Activated CD4-positive, alpha-beta memory T cell treated with anti-CD3 and anti-CD28 coated beads for 36 hours (primary cell): ENCODE measurements at regions of chr10 and their contacts with region 1.

Region 1: DNA sequence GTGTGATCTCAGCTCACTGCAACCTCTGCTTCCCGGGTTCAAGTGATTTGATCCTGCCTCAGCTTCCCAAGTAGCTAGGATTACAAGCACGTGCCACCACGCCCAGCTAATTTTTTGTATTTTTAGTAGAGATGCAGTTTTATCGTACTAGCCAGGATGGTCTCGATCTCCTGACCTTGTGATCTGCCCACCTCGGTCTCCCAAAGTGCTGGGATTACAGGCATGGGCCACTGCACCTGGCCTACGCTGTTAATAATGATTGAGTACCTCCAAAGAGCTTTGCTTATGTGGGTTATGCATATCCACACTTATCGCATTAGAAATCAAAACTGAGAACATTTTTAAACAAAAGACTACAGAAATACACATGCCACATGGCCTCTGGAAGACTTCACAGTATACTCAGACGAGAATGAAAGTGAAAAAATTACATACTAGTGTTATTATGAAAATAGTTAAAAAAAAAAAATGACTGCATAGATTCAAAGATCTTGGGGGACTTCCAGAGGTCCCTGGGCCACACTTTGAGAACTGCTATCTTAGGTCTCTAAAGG is 25.4 kb downstream of the RPP38 start:
- DNase-seq: peak; percentile 45
- H3K4me3 Mint-ChIP-seq: peak overlapping the region; percentile 53
- H3K27ac Mint-ChIP-seq: peak overlapping the region; percentile 92
- H3K4me1 Mint-ChIP-seq: peaks cover 32% of the 10 kb centered on the region
- H3K27me3 Mint-ChIP-seq: no peaks in the 10 kb centered on the region

Region 2: DNA sequence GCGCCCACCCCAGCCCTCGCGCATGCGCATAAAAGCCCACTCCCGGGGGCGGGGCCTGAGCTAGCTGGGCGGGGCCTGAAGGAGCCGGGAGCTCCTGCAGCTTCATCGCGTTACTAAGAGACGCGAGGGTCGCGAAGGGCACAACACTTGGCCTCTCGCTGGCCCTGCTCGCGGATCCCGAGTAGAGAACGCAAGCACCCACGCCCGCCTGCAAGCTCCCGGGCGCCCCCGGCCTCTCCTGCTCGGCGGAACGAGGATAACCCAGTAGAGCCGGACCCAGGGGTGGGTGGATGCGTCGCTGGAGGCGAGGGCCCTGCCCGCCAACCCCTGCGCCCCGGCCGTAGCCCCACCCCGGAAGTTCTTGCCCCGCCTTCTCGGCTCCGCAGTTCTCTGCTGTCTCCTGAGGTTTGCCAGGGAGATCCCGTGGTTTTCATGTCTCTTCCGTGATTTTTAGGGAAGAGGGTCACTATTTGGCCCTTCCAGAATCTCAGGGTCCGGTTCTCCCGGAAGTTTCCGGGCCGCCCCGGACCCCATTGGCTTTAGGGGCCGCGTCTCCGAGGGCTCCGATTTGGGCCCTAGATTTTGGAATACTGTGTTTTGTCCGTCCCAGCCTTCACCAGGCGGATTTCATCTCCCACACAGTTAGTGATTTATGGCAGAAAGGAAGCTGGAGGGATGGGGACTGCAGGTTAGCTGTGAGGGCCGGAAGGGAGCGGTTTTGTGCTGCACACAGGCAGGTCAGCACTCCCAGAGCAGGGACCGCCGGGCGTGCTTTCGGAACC is 163.1 kb before region 1 on chr10 and contains the start of gene MEIG1:
- CTCF ChIA-PET with region 1: no interaction called
- POLR2A ChIA-PET with region 1: interaction called, 4 read pairs
- intact Hi-C with region 1: loop called (anchors 1 kb)
- DNase-seq: peak; percentile 95
- H3K4me3 Mint-ChIP-seq: peak within 1 kb of the TSS; percentile 88
- H3K27ac Mint-ChIP-seq: peak within 1 kb of the TSS; percentile 95
- H3K4me1 Mint-ChIP-seq: peaks cover 24% of the 10 kb centered on the region
- H3K27me3 Mint-ChIP-seq: no peaks in the 10 kb centered on the region
- total RNA-seq, gene MEIG1: 0.95 to 1.4 TPM

Region 3: DNA sequence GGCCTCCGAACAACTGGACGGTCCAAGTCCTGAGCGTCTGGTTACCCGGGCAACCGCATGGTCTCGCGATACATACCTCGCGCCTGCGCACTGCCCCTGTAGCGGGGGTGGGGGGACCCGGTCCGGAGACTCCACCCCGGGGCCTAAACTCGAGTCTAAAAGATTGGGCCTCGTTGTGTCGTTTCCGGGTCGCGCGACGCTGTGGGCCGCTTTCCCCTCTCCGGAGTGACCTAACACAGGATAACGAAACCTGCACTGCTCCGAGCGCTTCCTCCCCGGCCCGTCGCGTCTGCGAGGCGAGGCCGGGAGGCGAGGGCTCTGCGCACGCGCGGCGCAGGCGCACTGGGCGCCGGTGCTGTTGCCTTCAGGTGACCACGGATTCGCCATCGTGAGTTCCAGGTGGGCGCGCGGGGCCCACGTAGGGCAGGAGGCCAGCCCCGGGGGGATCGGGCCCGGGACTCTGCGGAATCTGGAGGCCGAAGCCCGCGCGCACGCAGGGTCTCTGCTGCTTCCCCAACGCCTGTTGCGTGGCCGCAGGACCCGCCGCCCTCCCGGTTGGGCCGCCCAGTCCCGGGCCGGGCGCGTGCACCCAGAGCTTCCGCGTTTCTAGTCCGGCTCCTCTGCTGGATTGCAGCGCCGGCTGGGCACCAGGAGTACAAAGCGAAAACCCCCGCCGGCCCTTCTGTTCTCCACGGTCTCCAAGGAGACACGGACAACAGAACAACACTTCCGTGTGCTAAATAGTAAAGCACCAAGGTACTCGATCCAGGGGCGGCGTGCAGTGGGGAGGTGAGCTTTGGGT is 25.3 kb before region 1 on chr10 and contains the start of gene RPP38:
- CTCF ChIA-PET with region 1: interaction called, 5 read pairs
- POLR2A ChIA-PET with region 1: interaction called, 10 read pairs
- intact Hi-C with region 1: loop called (anchors 1 kb)
- DNase-seq: peak; percentile 97
- H3K4me3 Mint-ChIP-seq: peak within 1 kb of the TSS; percentile 94
- H3K27ac Mint-ChIP-seq: peak within 1 kb of the TSS; percentile 94
- H3K4me1 Mint-ChIP-seq: peaks cover 29% of the 10 kb centered on the region
- H3K27me3 Mint-ChIP-seq: no peaks in the 10 kb centered on the region
- total RNA-seq, gene RPP38: 18.3 to 19.2 TPM

Region 4: GRCh38 chr10:15106352-15107013 is 16.1 kb before region 1 on chr10:
- CTCF ChIA-PET with region 1: interaction called, 23 read pairs
- POLR2A ChIA-PET with region 1: interaction called, 3 read pairs
- intact Hi-C with region 1: no loop called
- DNase-seq: peak; percentile 79
- H3K4me3 Mint-ChIP-seq: no peak overlapping the region
- H3K27ac Mint-ChIP-seq: peak overlapping the region; percentile 51
- H3K4me1 Mint-ChIP-seq: peaks cover 10% of the 10 kb centered on the region
- H3K27me3 Mint-ChIP-seq: no peaks in the 10 kb centered on the region

Region 5: DNA sequence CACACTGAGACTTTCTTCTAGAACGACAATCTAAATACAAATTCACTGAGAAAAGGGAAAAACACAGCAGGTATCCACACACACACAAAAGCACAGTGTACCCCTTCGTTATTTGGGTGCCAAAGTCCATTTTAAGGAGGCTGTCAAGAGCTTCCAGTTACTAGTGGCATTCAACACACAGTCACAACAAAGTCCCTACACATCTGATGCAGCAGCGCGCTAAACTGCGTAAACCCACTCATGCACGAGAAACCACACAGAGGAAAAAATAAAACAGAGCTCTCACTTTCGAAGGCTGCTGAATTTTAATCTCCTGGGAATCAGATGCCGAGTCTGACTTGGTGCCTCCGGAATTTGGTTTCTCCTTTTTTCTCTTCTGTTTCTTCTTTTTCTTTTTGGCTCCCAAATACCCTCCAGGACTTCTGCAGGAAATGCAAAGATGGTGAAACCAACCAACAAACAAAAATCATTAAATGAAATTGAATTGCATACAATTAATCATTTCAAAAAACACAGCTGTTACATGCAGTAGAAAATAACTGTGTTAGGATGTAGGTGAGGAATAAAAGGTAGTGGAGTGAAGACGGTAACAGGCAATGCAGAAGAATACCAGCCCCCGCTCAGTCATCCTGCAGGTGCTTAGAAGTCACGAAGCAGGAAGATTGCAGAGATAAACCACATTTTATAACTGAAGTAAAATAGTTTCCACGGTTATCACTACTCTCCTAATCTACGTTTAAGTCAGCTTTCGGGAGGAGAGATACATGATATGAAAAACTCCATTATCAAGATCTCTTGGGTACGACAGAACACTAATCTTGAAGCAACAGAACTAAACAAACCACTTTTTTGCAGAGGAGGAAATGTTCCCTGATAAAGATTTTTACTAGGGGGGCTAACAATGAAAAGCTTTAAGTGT is 18.8 kb after region 1 on chr10:
- CTCF ChIA-PET with region 1: interaction called, 4 read pairs
- POLR2A ChIA-PET with region 1: interaction called, 15 read pairs
- intact Hi-C with region 1: loop called (anchors 1 kb)
- DNase-seq: peak; percentile 51
- H3K4me3 Mint-ChIP-seq: peak overlapping the region; percentile 33
- H3K27ac Mint-ChIP-seq: peak overlapping the region; percentile 35
- H3K4me1 Mint-ChIP-seq: peaks cover 45% of the 10 kb centered on the region
- H3K27me3 Mint-ChIP-seq: no peaks in the 10 kb centered on the region

Region 6: DNA sequence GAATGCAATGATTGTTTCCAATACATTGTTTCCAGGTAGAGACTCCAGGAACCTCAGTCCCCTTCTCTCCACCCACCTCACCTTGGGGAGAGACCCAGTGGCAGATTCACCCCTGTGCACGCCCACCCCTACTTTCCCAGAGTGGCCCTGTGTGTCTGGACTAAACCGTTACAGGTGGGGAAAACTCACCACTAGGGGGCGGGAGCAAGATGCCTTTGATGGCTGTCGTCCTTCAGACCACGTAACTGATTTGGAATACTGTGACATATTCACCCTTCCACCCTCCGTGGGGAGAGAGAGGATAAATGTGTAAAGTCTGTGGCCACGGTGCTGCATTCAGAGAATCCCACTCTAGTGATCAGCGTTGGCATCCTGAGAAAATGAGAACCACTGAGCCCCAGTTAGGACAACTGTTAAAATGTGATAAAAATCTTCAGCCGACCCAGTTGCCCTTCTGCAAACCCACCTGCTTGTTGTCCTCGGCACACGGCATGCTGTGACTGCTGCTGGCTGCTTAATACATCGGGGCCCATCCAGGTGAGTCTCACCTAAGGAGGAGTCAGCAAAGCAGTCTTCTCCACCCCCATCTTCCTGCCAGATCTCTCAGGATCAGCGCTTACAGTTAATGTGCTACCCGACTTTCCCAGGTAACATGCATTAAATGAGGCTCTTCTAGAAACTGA is 87.4 kb after region 1 on chr10:
- CTCF ChIA-PET with region 1: no interaction called
- POLR2A ChIA-PET with region 1: no interaction called
- intact Hi-C with region 1: loop called (anchors 1 kb)
- DNase-seq: peak; percentile 86
- H3K4me3 Mint-ChIP-seq: no peak overlapping the region
- H3K27ac Mint-ChIP-seq: no peak overlapping the region
- H3K4me1 Mint-ChIP-seq: peaks cover 49% of the 10 kb centered on the region
- H3K27me3 Mint-ChIP-seq: no peaks in the 10 kb centered on the region

Region 7: DNA sequence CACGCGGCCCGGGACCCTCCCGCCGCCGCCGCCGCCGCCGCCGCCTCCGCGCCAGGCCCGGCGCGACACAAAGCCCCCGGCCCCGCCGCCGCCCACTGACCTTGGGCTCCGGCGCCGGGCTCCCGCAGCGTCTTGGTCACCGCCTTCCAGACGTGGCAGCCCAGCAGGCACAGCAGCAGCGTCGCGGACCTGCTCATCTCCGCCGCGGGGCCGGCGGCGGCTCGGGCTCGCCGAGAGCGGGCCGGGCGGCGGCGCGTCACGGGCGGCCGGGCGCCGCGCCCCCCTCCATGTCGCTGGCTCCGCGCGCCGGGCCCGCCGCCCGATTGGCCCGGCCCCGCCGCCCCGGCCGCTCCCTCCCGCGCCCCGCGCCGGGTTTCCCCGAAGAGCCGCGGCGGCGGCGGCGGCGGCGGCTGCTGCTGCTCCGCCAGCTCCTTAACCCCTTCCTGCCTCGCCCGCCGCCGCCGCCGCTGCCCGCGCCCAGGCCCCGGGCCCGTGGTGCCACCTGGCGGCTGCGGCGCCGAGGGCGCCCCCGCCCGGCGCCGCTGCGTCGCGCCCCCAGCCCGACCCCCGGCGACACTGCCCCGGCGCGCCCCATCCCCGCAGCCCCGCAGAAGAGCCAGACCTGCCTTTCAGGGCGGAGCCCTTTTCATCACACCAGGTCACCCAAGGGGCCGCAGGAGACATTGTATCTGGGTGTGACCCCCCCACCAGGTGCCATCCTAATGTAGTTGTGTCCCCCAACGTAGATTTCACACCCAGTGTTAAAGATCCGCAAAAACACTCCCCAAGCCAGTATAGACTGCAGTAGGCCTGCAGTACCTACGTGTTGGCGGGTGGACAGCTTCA is 248.5 kb after region 1 on chr10 and contains the start of gene FAM171A1:
- CTCF ChIA-PET with region 1: no interaction called
- POLR2A ChIA-PET with region 1: no interaction called
- intact Hi-C with region 1: loop called (anchors 10 kb)
- DNase-seq: peak; percentile 76
- H3K4me3 Mint-ChIP-seq: peak within 1 kb of the TSS; percentile 70
- H3K27ac Mint-ChIP-seq: no peak within 1 kb of the TSS
- H3K4me1 Mint-ChIP-seq: peaks cover 9% of the 10 kb centered on the region
- H3K27me3 Mint-ChIP-seq: peaks cover 16% of the 10 kb centered on the region
- total RNA-seq, gene FAM171A1: 3.3 to 4.0 TPM